RWPE1 (cell line): ENCODE measurements at regions of chr11 and their contacts with region 1.

Region 1: GRCh38 chr11:18748766-18749365 is 22.9 kb upstream of the IGSF22 start:
- DNase-seq: no peak
- H3K27ac ChIP-seq: no peak overlapping the region
- CTCF ChIP-seq: no peak

Region 2: GRCh38 chr11:18671246-18671645 is 77.6 kb before region 1 on chr11:
- CTCF ChIA-PET with region 1: no interaction called
- POLR2A ChIA-PET with region 1: interaction called, 11 read pairs
- DNase-seq: no peak
- H3K27ac ChIP-seq: no peak overlapping the region
- CTCF ChIP-seq: no peak